Common myeloid progenitor, CD34-positive (primary cell): ENCODE measurements at regions of chr10 and their contacts with region 1.

Region 1: DNA sequence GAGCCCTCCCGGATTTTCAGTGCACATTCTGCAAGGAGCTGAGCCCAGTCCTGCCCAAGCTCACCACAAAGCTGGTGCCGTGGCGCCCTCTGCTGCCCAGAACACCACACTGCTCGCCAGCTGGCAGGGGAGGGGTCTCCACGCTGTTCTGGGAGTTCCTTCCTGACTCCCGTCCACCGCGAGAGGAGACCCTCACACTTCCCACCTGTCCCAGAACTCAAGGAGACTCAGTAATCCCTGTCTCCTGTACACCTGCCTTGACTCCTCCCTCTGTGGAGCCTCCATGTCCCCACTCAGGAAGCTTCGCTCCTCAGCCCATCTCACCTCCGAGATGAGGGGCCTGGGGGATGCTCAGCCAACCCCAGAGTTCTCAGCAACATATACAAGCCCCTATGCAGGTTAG is 11.3 kb downstream of the C10orf105 start:
- DNase-seq: peak; percentile 41 to 54 (median 54)
- H3K4me3 ChIP-seq: no peak overlapping the region
- H3K27ac ChIP-seq: no peak overlapping the region
- H3K4me1 ChIP-seq: peaks cover 0 to 45% (median 17%) of the 10 kb centered on the region in 4 experiments
- H3K27me3 ChIP-seq: no peaks in the 10 kb centered on the region

Region 2: DNA sequence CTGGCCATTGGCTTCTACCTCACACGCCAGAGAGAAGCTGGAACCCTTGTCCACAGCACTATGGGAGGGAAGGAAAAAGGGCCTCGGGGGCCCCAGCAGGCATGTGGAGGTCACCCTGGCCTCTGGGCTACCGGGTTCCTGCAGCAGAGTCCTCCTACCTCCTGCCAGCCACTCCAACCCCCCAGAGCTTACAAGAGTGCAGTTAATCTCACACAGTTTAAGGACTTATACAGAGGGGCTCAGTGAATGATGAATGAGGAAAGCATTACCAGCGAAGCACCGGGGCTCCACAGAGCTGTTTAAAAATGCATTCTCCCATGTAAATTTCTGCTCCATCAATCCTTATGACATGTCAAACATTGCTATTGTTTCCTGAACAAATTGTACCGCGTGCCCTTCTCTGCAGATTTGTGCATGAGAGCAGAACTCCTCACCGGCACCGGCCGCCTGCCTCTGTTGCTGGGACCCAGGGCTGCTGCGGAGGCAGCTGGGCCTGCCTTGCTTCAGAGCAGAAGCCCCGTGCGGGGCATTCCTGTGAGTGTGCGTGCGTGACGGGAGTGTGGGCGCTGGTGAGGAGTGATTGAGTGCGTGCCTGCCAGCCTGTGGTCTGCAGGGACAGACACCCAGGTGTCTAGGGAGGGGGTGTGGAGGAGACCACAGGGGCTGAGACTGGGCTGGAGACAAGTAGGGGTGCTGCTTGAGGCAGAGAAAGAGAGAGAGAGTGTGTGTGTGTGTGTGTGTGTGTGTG is 41.5 kb before region 1 on chr10:
- CTCF ChIA-PET with region 1: interaction called, 19 read pairs
- POLR2A ChIA-PET with region 1: no interaction called
- DNase-seq: peak; percentile 50 to 88 (median 84)
- H3K4me3 ChIP-seq: no peak overlapping the region
- H3K27ac ChIP-seq: no peak overlapping the region
- H3K4me1 ChIP-seq: peaks cover 0 to 35% (median 19%) of the 10 kb centered on the region in 4 experiments
- H3K27me3 ChIP-seq: no peaks in the 10 kb centered on the region

Region 3: GRCh38 chr10:71696628-71697326 is 11.5 kb before region 1 on chr10:
- CTCF ChIA-PET with region 1: interaction called, 108 read pairs
- POLR2A ChIA-PET with region 1: interaction called, 4 read pairs
- DNase-seq: peak; percentile 37 to 69 (median 47)
- H3K4me3 ChIP-seq: no peak overlapping the region
- H3K27ac ChIP-seq: no peak overlapping the region
- H3K4me1 ChIP-seq: peaks cover 0 to 52% (median 24%) of the 10 kb centered on the region in 4 experiments
- H3K27me3 ChIP-seq: no peaks in the 10 kb centered on the region

Region 4: GRCh38 chr10:71719042-71719441 is 10.7 kb after region 1 on chr10:
- CTCF ChIA-PET with region 1: interaction called, 41 read pairs
- POLR2A ChIA-PET with region 1: no interaction called
- DNase-seq: no peak
- H3K4me3 ChIP-seq: no peak overlapping the region
- H3K27ac ChIP-seq: no peak overlapping the region
- H3K4me1 ChIP-seq: peaks cover 4 to 48% (median 30%) of the 10 kb centered on the region in 4 experiments
- H3K27me3 ChIP-seq: no peaks in the 10 kb centered on the region

Region 5: DNA sequence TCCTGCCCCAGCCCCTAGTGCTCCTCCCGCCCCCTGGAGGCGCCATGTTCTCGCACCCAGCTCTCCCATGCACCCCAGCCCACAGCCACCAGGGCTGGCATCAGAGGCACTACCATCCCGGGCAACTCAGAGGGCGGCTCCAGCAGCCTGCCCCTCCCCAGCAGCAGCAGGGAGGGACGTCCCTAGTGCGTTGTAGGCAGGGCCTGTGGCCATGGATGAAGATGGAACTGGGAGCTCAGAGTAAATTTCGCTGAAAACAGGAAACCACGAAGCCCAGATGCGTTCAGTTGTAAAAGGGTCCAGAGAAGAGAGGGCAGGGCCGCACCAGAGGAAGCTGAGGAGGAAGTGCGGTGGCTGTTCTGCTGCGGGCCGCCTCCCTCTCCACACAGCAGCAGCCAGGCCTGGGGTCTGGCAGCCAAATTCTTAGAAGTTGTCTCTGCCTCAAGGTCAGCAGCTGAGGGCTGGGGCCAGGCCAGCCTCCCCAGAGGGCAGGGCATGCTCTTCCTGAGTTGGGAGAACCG is 40.4 kb after region 1 on chr10:
- CTCF ChIA-PET with region 1: interaction called, 36 read pairs
- POLR2A ChIA-PET with region 1: no interaction called
- DNase-seq: peak; percentile 96 to 99 (median 99)
- H3K4me3 ChIP-seq: peak overlapping the region in 4 of 7 experiments; percentile 11 to 29 (median 18)
- H3K27ac ChIP-seq: peak overlapping the region; percentile 60 to 82
- H3K4me1 ChIP-seq: peaks cover 26 to 91% (median 87%) of the 10 kb centered on the region in 4 experiments
- H3K27me3 ChIP-seq: no peaks in the 10 kb centered on the region